H1 (cell line): ENCODE measurements at regions of chr7 and their contacts with region 1.

Region 1: DNA sequence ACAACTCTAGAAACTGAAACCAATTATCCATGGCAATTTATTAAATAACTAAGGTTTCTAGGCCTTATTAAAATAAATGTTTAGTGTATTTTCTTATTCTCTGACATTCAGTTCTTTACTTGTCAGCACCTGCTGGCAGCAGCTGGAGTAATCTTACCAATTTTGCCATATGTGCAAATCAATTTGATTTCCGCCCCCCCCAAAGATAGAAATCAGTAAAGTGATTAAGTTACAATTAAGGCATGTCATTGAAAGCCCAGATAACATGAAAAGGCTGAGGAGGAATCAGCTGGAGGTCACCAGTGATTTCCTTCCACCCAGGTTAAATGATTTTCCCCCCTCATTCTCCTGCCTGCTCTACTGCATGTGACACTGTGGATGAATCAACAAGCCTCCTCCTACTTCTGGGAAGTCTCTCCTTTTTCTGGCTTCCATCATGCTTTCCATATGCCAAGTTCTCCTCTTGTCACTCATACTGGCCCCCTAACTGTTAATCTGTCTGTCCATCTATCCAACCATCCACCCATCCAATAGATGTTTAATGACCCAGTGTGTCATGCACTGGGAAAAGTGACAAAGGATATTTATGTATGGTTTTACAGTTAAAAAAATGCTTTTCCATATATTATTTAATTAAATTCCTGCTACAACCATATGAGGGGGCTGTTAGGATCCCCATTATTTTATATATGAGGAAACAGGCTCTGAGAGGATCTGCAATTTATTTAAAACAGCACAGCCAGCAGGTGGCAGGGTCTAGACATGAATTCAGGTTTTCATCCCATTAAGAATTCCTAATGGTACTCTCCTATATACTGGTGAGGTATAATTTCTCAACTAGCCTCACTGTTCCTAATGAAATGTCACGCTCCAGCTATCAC is 116.5 kb downstream of the ATXN7L1 start:
- DNase-seq: no peak
- H3K4me3 ChIP-seq: no peak overlapping the region
- H3K27ac ChIP-seq: no peak overlapping the region
- H3K4me1 ChIP-seq: peaks cover 1 to 13% (median 4%) of the 10 kb centered on the region in 4 experiments; a peak in 4 of 7 replicates
- H3K27me3 ChIP-seq: no peaks in the 10 kb centered on the region
- CTCF ChIP-seq: peak in 2 of 3 experiments; percentile 45 to 47; a peak in 2 of 4 replicates
- EP300 ChIP-seq: no peak
- POLR2A ChIP-seq: no peak
- RAD21 ChIP-seq: peak; percentile 65 to 69

Region 2: GRCh38 chr7:105700793-105701192 is 59.1 kb before region 1 on chr7:
- CTCF ChIA-PET with region 1: interaction called, 10 read pairs
- POLR2A ChIA-PET with region 1: no interaction called
- DNase-seq: no peak
- H3K4me3 ChIP-seq: no peak overlapping the region
- H3K27ac ChIP-seq: no peak overlapping the region
- H3K4me1 ChIP-seq: peaks cover 10 to 21% (median 13%) of the 10 kb centered on the region in 4 experiments
- H3K27me3 ChIP-seq: no peaks in the 10 kb centered on the region
- CTCF ChIP-seq: no peak
- EP300 ChIP-seq: no peak
- POLR2A ChIP-seq: no peak
- RAD21 ChIP-seq: no peak

Region 3: DNA sequence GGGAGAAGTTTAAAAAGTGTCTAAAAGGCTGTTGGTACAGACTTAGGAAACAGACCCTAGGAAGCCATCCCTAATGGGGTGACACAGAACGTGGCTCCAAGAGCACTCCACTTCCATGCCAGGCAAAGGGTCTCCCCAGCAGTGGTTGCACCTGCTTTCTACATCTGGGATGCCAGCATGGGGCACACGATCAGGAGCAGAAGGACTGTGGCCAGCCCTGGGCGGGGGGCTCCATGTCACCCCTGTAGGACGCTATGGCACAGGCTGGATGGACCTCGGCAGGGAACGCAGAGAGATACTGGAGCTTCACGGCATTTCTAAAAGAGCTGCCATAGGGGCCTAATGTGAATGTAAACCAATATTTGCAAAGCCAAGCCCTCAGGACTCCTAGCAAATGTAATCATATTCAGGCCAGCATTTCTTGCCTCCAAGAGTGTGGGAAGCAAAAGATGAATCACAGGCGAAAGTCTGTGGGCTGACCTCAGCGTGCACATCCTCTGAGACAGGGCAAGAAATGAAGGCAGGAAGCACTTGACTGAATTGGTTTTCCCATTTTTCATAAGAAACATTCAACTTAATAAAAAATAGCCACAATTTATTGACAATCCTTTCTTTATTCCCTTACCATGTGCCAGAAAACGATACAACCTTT is 22.6 kb after region 1 on chr7:
- CTCF ChIA-PET with region 1: interaction called, 28 read pairs
- POLR2A ChIA-PET with region 1: interaction called, 4 read pairs
- DNase-seq: no peak
- H3K4me3 ChIP-seq: no peak overlapping the region
- H3K27ac ChIP-seq: no peak overlapping the region
- H3K4me1 ChIP-seq: peaks cover 0 to under 1% (median 0%) of the 10 kb centered on the region in 4 experiments; a peak in 2 of 7 replicates
- H3K27me3 ChIP-seq: no peaks in the 10 kb centered on the region
- CTCF ChIP-seq: no peak
- EP300 ChIP-seq: no peak
- POLR2A ChIP-seq: no peak
- RAD21 ChIP-seq: no peak

Region 4: GRCh38 chr7:105876091-105876963 is 116.4 kb after region 1 on chr7 and contains the start of gene ATXN7L1:
- CTCF ChIA-PET with region 1: interaction called, 99 read pairs
- POLR2A ChIA-PET with region 1: no interaction called
- DNase-seq: peak; percentile 90 to 96
- H3K4me3 ChIP-seq: peak within 1 kb of the TSS; percentile 87 to 93 (median 90)
- H3K27ac ChIP-seq: peak within 1 kb of the TSS; percentile 91
- H3K4me1 ChIP-seq: peaks cover 6 to 27% (median 15%) of the 10 kb centered on the region in 4 experiments; a peak in 5 of 7 replicates
- H3K27me3 ChIP-seq: peaks cover 0 to 14% (median 12%) of the 10 kb centered on the region in 4 experiments; a peak in 5 of 7 replicates
- CTCF ChIP-seq: peak; percentile 50 to 57 (median 55); a peak in 3 of 4 replicates
- EP300 ChIP-seq: no peak
- POLR2A ChIP-seq: peak; percentile 79 to 89
- RAD21 ChIP-seq: peak; percentile 1 to 46; a peak in 2 of 4 replicates
- total RNA-seq, gene ATXN7L1: 34.0 and 34.5 TPM in 2 replicates